ENCODE measurements at regions of chr5 and their contacts with region 1.

Region 1: DNA sequence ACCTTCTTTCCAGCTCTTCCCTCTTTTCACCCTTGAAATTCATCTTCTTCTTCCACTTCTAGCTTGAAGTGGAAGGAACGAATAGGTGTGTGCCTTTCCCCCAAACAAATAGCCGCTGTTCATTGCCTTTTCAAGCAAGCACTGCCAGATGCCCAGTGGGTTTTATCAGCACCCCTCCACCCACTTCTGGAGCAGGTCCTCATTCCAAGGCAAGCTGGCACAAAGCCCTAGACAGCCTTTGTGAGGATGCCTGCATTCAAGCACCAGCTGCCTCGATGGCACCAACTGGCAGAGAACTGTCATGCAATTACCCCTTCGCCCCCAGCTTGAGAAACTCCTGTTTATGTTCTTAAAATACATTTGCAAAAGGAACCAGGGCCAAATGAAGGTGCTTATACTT is 36.5 kb downstream of the SERINC5 start:
- DNase-seq: no peak
- H3K4me3 Mint-ChIP-seq: no peak overlapping the region
- H3K27ac Mint-ChIP-seq: peak overlapping the region; percentile 49
- H3K4me1 Mint-ChIP-seq: peaks cover 54% of the 10 kb centered on the region
- H3K27me3 Mint-ChIP-seq: no peaks in the 10 kb centered on the region

Region 2: GRCh38 chr5:79845448-79846197 is 373.8 kb before region 1 on chr5:
- intact Hi-C with region 1: no loop called
- DNase-seq: peak; percentile 21
- H3K4me3 Mint-ChIP-seq: no peak overlapping the region
- H3K27ac Mint-ChIP-seq: peak overlapping the region; percentile 50
- H3K4me1 Mint-ChIP-seq: peaks cover 22% of the 10 kb centered on the region
- H3K27me3 Mint-ChIP-seq: peaks cover 4% of the 10 kb centered on the region

Region 3: DNA sequence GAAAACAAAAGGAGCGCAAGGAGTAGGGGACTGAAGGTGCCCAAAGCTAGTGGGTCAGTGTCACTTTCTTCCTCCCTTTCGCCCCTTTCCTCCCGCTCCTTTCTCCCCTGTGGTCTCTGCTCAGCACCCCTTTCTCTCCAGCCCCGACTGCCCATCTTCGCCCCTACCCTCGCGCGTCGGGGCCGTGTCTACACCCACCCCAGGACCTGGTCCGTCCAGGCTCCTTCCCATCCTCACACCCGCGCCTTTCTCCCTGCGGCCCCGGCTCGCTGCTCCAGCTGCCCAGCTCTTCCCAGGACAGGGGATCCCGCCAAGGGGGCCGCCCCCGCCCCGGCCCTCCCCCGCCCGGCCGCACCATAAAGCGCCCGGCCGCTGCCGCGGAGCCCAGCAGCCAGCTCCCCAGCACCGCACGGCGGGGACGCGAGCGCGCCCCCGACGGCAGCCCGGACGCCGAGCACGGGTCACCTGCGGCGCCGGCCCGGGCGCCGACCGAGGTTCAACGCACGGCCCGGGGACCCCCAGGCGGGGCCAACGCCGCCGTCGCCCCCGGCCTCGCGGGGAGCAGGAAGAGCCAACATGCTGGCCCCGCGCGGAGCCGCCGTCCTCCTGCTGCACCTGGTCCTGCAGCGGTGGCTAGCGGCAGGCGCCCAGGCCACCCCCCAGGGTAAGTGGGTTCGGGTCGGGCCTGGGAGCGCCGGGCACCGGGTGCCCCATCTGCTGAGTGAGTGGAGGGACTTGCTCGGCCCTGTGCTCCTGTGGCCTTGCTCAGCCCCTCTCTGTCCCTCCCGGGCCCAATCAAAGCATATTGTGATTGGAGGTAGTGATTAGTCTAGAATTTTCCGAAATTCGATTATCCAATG is 184.2 kb before region 1 on chr5 and contains the start of gene THBS4:
- intact Hi-C with region 1: no loop called
- DNase-seq: no peak
- H3K4me3 Mint-ChIP-seq: peak within 1 kb of the TSS; percentile 45
- H3K27ac Mint-ChIP-seq: no peak within 1 kb of the TSS
- H3K4me1 Mint-ChIP-seq: peaks cover 40% of the 10 kb centered on the region
- H3K27me3 Mint-ChIP-seq: peaks cover 30% of the 10 kb centered on the region
- total RNA-seq, gene THBS4: 0.92 and 1.1 TPM in 2 replicates

Region 4: GRCh38 chr5:80231243-80231642 is 11.9 kb after region 1 on chr5:
- intact Hi-C with region 1: loop called (anchors 2 kb)
- DNase-seq: no peak
- H3K4me3 Mint-ChIP-seq: no peak overlapping the region
- H3K27ac Mint-ChIP-seq: peak overlapping the region; percentile 29
- H3K4me1 Mint-ChIP-seq: peaks cover 34% of the 10 kb centered on the region
- H3K27me3 Mint-ChIP-seq: no peaks in the 10 kb centered on the region

Measured in activated T-helper 2 cell treated with anti-CD3 and anti-CD28 coated beads, Interferon-gamma antibody, Interleukin-2, Interleukin-4, amounts not matched to agents 10 μg/mL and 5 μg/mL and 100 μg/mL, durations not matched to agents 14 hours and 24 hours and 36 hours (primary cell).